ENCODE measurements at regions of chr9 and their contacts with region 1.

Region 1: DNA sequence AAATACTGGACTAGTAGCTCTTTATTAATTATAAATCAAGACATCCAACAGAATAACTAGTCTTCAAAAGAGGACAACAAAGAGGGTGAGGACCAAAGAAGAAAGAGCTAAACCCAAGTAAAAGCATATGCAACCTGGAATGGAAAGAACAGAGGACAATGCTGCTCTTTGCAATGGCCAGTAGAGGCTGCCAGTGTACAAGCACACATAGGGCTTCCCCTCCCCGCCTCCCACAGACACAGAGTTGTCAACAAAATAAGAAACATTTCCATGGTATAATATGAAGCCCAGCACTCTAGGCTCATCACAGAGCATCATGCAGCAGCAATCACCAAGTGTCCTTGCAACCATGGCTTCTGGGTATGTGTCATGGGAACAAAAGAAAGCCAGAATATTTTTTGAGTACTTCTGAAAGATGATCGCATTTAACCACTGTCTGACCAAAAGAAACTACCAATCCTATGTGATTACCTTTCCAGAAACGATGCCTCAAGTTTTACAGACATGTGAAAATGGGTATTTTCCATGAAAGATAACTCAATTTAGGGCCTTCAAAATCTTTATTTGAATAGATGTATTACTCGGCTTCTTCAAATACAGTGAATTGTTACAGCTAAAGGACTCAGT is 58.1 kb downstream of the RFX3 start:
- DNase-seq: peak; percentile 40
- H3K4me3 Mint-ChIP-seq: no peak overlapping the region
- H3K27ac Mint-ChIP-seq: no peak overlapping the region
- H3K4me1 Mint-ChIP-seq: peaks cover 6% of the 10 kb centered on the region
- H3K27me3 Mint-ChIP-seq: no peaks in the 10 kb centered on the region

Region 2: DNA sequence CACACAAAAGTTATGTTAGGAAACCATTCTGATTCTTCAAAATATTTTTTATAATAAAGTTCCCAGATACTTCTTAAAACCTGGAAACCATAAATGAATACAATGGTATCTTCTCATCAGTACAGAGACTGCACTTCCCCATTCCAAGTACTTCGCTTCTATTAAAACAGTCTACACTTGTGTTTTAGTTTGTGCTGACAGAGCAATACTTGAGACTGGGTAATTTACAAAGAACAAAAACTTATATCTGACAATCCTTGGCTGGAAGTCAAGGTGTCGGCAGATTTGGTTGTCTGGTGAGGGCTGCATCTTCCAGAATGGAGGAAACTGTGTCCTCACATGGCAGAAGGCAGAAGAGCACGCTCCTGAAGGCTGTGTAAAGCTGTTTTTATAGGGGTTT is 12.0 kb before region 1 on chr9:
- intact Hi-C with region 1: no loop called
- DNase-seq: no peak
- H3K4me3 Mint-ChIP-seq: no peak overlapping the region
- H3K27ac Mint-ChIP-seq: no peak overlapping the region
- H3K4me1 Mint-ChIP-seq: no peaks in the 10 kb centered on the region
- H3K27me3 Mint-ChIP-seq: no peaks in the 10 kb centered on the region

Region 3: GRCh38 chr9:3478549-3478953 is 10.8 kb after region 1 on chr9:
- intact Hi-C with region 1: loop called (anchors 1 kb)
- DNase-seq: no peak
- H3K4me3 Mint-ChIP-seq: peak overlapping the region; percentile 35
- H3K27ac Mint-ChIP-seq: peak overlapping the region; percentile 82
- H3K4me1 Mint-ChIP-seq: peaks cover 77% of the 10 kb centered on the region
- H3K27me3 Mint-ChIP-seq: no peaks in the 10 kb centered on the region

Region 4: DNA sequence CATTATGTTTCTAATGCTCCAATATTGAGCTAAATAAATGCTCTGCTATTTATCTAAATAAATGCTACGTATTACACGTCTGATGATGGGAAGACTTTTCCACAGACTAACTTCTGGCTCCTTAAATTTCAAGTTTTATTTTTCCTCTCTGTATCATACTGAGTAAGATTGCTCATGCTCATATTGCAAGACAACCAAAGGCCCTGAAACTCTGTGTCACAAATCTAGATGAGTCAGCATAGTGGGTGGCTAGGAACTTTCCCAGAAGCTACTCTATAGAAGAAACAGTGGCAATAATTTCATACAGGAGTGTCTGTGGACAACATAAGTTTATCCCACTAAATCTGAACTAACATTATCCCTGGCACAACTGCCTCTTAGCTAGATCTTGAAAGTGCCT is 111.1 kb after region 1 on chr9:
- intact Hi-C with region 1: loop called (anchors 10 kb)
- DNase-seq: no peak
- H3K4me3 Mint-ChIP-seq: no peak overlapping the region
- H3K27ac Mint-ChIP-seq: no peak overlapping the region
- H3K4me1 Mint-ChIP-seq: peaks cover 7% of the 10 kb centered on the region
- H3K27me3 Mint-ChIP-seq: peaks cover 2% of the 10 kb centered on the region

Region 5: DNA sequence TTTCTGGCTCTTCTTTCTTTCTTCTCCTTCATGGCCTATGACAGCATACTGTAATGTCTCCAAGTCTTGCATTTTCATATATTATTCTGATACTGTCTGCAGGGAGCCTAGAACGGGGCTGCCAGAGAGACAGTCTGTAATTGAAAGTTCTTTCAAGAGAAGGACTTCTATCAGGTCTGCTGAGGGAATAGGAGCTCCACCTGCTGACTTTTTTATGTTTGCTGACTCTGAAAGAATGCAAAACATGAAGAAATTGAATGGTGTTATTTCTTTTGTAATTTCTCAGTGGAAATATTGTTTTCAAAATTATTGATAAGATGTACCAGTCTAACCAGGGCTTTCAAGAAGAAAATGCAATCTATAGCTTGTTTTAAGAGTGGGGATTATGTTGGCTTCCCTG is 179.9 kb after region 1 on chr9:
- intact Hi-C with region 1: loop called (anchors 5 kb)
- DNase-seq: no peak
- H3K4me3 Mint-ChIP-seq: no peak overlapping the region
- H3K27ac Mint-ChIP-seq: no peak overlapping the region
- H3K4me1 Mint-ChIP-seq: peaks cover 5% of the 10 kb centered on the region
- H3K27me3 Mint-ChIP-seq: no peaks in the 10 kb centered on the region

Region 6: DNA sequence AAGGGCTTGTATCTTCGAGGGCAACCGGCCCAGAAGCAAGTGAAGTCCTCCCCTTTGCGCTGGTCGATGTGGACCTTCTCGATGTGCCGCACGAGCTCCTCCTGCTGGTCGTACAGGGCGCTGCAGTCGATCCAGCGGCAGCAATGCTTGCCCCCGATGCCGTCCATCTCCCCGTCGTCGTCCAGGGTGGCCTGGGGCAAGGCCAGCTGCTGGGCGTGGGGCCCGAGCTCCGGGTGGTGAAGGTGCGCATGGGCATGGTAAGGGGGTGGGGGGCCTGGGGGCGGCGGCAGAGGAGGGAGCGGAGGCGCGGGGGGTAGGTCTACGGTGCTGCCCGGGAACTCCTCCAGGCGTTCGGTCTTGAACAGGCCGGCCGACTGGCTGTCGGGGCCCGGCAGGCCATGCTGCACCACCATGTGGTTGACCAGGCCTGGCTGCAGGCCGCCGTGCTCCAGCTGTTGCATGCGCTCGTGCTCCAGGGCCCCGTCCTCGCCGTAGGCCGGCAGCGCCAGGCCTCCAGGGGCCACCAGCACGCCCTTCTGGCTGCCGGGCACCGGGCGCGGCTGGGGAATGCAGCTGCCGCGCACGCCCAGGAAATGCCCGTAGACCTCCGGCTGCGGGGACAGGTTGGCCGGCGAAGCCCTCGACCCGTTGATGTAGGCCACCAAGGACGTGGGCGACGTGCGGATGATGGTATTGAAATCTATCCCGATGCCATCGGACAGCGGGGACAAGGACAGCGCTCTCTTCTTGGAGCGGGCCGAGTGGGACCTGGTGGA is 650.3 kb after region 1 on chr9:
- intact Hi-C with region 1: loop called (anchors 1 kb)
- DNase-seq: peak; percentile 13
- H3K4me3 Mint-ChIP-seq: no peak overlapping the region
- H3K27ac Mint-ChIP-seq: no peak overlapping the region
- H3K4me1 Mint-ChIP-seq: no peaks in the 10 kb centered on the region
- H3K27me3 Mint-ChIP-seq: no peaks in the 10 kb centered on the region

Region 7: DNA sequence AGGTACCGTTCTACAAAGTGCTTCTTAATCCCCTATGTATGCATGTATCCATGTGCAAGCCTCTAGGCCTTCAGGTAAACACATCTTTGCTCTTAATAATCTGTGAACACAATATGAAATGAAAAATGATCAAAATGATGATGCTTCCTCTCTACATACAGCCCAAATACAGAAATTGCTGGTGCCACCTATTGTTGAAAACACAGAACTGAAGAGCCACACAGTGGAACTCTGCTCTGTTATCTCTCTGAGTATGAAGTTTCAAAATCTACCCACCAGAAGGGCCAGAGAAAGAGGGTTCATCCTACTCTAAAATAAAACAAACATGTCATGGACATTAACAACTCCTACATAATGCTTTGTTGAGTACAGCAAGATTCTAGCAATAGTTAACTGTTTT is 760.9 kb after region 1 on chr9:
- intact Hi-C with region 1: loop called (anchors 10 kb)
- DNase-seq: no peak
- H3K4me3 Mint-ChIP-seq: no peak overlapping the region
- H3K27ac Mint-ChIP-seq: no peak overlapping the region
- H3K4me1 Mint-ChIP-seq: peaks cover 6% of the 10 kb centered on the region
- H3K27me3 Mint-ChIP-seq: peaks cover 7% of the 10 kb centered on the region